Activated T-helper 2 cell treated with anti-CD3 and anti-CD28 coated beads, Interferon-gamma antibody, Interleukin-2, Interleukin-4, amounts not matched to agents 10 μg/mL and 5 μg/mL and 100 μg/mL, durations not matched to agents 14 hours and 24 hours and 36 hours (primary cell): ENCODE measurements at regions of chr7 and their contacts with region 1.

Region 1: DNA sequence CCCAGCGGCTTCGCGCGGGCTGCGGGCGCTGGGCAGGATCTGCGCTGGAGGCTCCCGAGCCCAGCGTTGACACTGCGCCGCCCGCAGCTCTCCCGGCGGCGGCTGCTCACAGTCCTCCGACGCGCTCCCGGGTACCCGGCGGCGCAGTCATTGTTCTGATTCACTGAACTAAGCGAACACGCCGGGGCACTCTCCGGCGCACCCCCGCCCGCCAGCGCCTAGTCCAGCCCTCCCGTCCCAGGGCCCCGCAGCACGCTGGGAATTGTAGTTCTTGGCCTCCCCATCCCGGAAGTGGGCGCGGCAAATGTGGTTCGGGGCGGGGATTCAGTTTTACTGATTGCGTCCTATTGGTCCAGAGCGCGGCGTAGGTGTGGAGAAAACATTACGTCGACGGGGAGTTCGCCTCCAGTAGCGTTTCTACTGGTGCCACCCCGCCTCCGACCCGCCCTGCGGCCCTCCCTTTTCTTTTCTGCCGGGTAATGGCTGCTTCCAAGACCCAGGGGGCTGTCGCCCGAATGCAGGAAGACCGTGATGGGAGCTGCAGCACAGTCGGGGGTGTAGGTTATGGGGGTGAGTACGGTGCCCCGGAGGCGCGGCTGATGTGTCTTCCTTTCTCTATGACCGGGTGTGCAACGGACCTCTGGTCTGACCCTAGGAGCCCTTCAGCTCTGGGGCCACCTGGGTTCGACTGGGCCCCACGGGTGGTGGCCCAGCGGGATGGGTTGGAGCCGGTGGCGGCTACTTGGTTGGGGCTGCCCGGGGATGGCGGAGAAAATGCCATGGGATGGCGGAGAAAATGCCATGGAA is at the starts of genes DOCK4 and ZNF277:
- DNase-seq: peak; percentile 98
- H3K4me3 Mint-ChIP-seq: peak within 1 kb of the TSS; percentile 92
- H3K27ac Mint-ChIP-seq: peak within 1 kb of the TSS; percentile 78
- H3K4me1 Mint-ChIP-seq: peaks cover 22% of the 10 kb centered on the region
- H3K27me3 Mint-ChIP-seq: peaks cover 33% of the 10 kb centered on the region
- total RNA-seq, gene DOCK4: 0.41 and 0.64 TPM in 2 replicates
- total RNA-seq, gene ZNF277: 11.6 and 13.0 TPM in 2 replicates

Region 2: DNA sequence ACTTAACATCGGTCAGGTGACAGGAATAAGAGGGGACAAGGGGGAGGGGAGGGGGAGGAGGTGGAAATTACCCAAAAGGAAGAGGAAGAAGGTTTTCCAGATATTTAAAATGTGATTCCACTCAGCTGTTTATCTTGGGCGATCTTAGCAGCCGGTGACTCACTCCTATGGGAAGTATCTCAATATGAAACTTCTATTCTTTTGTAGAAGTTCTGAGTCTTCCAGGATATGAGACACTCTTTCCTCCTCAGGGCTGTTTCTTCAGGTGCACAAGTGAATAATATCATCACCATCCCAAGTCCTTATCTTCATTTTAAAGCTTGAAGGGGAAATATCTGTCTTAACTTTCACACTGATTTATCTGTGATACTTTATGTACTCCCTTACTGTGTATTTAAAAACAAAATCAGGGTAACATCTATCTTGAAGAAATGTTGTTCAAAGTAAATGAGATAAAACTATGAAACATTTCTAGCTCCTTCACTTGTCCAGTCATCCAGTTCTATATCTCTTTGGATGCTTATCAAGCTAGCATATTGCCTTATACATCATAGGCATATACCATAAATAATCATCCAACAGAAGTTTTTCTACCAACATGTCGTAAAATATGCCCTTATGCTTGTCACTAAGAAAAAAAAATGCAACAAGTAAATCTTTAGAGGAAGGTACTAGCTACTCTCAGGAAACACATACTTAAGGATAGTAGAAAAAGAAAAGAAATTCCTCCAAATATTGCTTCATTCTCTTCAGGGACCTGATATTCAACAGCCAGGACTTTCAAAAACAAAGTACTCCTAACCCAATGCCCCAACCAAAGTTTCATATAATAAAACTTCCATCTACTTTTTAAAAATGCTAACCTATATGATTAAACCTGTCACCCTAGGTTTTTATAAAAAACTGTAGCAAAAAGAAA is 13.9 kb before region 1 on chr7:
- intact Hi-C with region 1: loop called (anchors 1 kb)
- DNase-seq: no peak
- H3K4me3 Mint-ChIP-seq: no peak overlapping the region
- H3K27ac Mint-ChIP-seq: no peak overlapping the region
- H3K4me1 Mint-ChIP-seq: peaks cover 3% of the 10 kb centered on the region
- H3K27me3 Mint-ChIP-seq: peaks cover 22% of the 10 kb centered on the region

Region 3: GRCh38 chr7:112449902-112450806 is 243.7 kb after region 1 on chr7 and contains the start of gene IFRD1:
- intact Hi-C with region 1: loop called (anchors 1 kb)
- DNase-seq: peak; percentile 96
- H3K4me3 Mint-ChIP-seq: peak within 1 kb of the TSS; percentile 97
- H3K27ac Mint-ChIP-seq: peak within 1 kb of the TSS; percentile 98
- H3K4me1 Mint-ChIP-seq: peaks cover 50% of the 10 kb centered on the region
- H3K27me3 Mint-ChIP-seq: no peaks in the 10 kb centered on the region
- total RNA-seq, gene IFRD1: 49.5 and 51.7 TPM in 2 replicates

Region 4: DNA sequence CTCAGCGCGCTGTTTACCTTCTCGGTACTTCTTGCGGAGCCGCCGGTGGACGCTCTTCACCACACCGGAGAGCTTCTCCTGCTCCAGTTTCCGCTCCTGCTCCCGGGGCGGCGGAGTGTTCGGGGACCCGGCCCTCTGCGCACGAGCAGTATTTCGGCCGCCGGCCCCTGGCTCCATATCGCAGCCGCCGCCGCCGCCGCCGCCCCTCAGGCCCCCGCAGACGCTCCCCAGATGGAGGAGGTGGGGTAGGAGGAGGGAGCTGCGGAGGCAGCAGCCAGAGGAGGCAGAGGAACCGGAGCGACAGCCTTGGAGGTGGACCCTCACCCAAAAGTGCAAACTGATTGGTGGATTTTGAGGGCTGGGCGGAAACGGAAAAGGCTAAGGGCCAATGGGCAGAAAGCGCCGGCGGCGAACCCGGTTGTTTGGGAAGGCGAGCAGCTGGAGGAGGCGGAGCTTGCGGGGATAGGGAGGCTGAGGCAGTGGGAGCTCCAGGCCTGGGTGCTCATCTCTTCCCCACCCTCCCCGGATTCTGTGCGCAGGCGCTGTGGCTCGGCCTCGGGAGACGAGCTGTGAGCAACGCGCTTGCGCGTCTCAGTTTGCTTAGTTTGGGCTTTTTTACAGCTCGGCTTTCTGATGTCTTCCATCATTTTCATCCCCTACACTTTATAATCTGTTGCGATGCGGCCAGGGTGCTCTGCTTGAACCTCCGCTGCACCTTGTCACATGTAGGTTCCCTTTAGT is 733.3 kb after region 1 on chr7:
- intact Hi-C with region 1: loop called (anchors 1 kb)
- DNase-seq: peak; percentile 99
- H3K4me3 Mint-ChIP-seq: peak overlapping the region; percentile 91
- H3K27ac Mint-ChIP-seq: peak overlapping the region; percentile 94
- H3K4me1 Mint-ChIP-seq: peaks cover 27% of the 10 kb centered on the region
- H3K27me3 Mint-ChIP-seq: peaks cover 4% of the 10 kb centered on the region